ENCODE measurements at regions of chr2 and their contacts with region 1.

Region 1: DNA sequence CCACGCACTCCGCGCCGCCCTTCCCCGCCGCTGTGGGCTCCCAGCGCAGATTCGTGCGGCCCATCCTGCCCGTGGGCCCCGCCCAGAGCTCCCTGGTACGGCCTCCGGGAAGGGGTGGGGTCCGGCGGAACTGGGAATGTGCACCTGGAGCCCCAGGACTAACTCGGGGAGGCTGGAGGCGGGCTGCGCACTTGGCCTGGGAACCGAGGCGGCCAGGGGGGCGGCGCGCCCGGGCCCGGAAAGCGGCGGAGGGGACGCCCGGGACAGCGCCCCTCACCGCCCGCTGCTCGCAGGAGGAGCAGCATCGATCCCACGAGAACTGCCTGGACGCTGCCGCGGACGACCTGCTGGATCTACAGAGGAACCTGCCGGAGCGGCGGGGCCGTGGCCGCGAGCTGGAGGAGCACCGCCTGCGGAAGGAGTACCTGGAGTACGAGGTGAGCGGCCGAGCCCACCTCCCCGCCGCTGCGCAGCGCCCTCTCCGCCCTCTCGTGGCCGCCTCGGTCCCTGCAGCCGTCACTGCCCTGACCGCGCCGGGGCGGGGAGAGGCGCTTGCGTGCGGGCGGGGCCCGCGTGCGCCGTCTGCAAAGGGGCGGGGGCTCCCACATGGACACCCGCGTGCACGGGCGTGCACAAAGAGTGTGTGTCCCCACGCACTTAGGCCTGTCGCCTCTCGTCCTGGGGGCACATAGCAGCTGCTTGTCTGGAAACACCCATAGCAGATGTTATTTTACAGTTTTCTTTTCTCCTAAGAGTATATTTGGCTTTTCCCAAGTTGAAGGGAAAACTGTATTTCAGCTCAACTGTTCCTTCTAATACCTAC is 25.2 kb downstream of the PSD4 start:
- DNase-seq: peak; percentile 47
- ATAC-seq: peak; percentile 95
- H3K4me3 ChIP-seq: peak overlapping the region; percentile 78
- H3K27ac ChIP-seq: no peak overlapping the region; the same call in 1 of the 2 replicates
- H3K4me1 ChIP-seq: no peaks in the 10 kb centered on the region
- H3K27me3 ChIP-seq: peaks cover 19% of the 10 kb centered on the region; the same call in 1 of the 2 replicates
- CTCF ChIP-seq: peak; percentile 83
- POLR2A ChIP-seq: no peak
- RAD21 ChIP-seq: peak; percentile 44

Region 2: GRCh38 chr2:112938904-112939303 is 260.1 kb before region 1 on chr2:
- CTCF ChIA-PET with region 1: no interaction called
- POLR2A ChIA-PET with region 1: no interaction called
- dilution Hi-C with region 1: no loop called
- in situ Hi-C with region 1: no loop called
- intact Hi-C with region 1: no loop called
- DNase-seq: peak; percentile 13
- ATAC-seq: no peak
- H3K4me3 ChIP-seq: no peak overlapping the region
- H3K27ac ChIP-seq: no peak overlapping the region
- H3K4me1 ChIP-seq: no peaks in the 10 kb centered on the region
- H3K27me3 ChIP-seq: peaks cover 4% of the 10 kb centered on the region
- CTCF ChIP-seq: no peak
- POLR2A ChIP-seq: no peak
- RAD21 ChIP-seq: no peak

Region 3: DNA sequence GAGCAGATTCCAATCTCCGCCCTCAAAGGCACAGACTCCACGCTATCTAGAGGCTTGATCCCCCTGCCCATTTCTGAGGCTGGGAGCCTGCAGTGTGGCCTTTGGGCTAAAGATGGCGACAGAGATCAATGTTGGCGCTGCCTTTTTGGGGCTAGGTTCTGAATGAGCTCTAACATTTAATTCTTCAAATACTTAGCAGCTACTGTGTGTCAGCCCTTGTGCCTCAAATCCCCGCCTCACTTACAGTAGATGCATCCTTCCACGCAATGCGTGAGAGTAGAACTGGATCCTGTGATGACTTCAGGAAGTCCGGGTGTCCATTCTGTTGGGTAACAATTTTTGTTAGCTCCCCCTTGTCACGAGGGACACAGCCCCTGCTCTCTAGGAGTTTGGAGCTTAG is 118.9 kb before region 1 on chr2:
- CTCF ChIA-PET with region 1: interaction called, 5 read pairs
- POLR2A ChIA-PET with region 1: no interaction called
- dilution Hi-C with region 1: no loop called
- in situ Hi-C with region 1: no loop called
- intact Hi-C with region 1: loop called (anchors 1 kb)
- DNase-seq: no peak
- ATAC-seq: peak; percentile 69
- H3K4me3 ChIP-seq: no peak overlapping the region
- H3K27ac ChIP-seq: no peak overlapping the region
- H3K4me1 ChIP-seq: no peaks in the 10 kb centered on the region
- H3K27me3 ChIP-seq: peaks cover 14% of the 10 kb centered on the region
- CTCF ChIP-seq: peak; percentile 49
- POLR2A ChIP-seq: no peak
- RAD21 ChIP-seq: peak; percentile 47

Measured in IMR-90 (cell line).